ENCODE measurements at regions of chr18 and their contacts with region 1.

Region 1: GRCh38 chr18:48951448-48952286 is 902 bp upstream of the SMAD7 start:
- DNase-seq: peak; percentile 91 to 95 (median 91)
- ATAC-seq: peak; percentile 74 to 85 (median 77)
- H3K4me3 ChIP-seq: peak overlapping the region; percentile 72 to 98 (median 90)
- H3K27ac ChIP-seq: peak overlapping the region; percentile 95 to 100 (median 98)
- H3K4me1 ChIP-seq: peaks cover under 1 to 57% (median 39%) of the 10 kb centered on the region in 12 donors
- H3K27me3 ChIP-seq: peaks cover 0 to 6% (median 0%) of the 10 kb centered on the region in 9 donors
- CTCF ChIP-seq: peak in 6 of 12 donors; percentile 14 to 54 (median 32)
- POLR2A ChIP-seq: peak in 1 of 2 donors; percentile 87

Region 2: DNA sequence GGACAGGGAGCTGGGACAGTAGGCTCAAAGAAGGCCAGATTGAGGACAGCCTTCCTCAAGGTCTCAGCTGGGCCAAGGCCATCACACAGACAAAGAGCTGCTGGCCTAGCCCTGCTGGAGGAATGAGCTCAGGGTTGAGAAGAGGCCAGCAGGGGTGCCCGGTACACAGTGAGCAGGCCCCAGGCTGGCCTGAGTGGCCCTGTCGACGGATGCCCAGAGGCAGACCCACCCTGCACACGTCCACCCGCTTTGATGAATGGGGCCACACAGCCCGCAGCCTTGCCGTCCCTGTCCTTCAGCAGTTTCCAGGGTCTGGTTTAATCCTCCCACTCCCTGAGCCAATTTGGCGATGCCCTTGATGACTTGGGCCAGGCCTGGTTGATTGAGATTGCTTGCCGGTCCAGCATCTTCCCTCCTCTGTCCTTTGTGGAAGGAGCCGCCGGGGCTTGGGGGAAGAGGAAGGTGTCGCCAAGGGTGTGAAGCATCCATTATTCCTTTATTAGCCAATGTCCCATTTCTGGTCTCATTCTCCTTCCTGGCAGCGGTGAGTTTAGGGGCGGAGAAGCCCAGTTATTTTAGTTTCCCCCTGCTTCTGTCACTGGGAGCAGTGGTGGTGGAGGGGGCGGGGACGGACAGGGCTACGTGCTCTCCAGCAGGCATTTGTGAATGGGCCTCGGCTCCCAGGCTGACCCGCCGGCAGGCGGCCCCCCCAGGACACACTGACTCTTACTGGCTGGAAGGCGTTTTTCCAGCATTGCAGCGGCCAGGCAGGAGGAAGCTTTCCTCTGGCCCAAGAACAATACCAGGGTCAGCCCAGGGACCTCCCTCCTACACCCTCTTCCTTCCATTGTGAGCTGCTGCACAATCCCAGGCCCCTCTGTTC is 271.1 kb before region 1 on chr18:
- intact Hi-C with region 1: loop called in 6 of 10 experiments (anchors 2 to 10 kb)
- DNase-seq: peak; percentile 88 to 92 (median 91)
- ATAC-seq: peak; percentile 89 to 95 (median 90)
- H3K4me3 ChIP-seq: no peak overlapping the region
- H3K27ac ChIP-seq: peak overlapping the region; percentile 56 to 94 (median 86)
- H3K4me1 ChIP-seq: peaks cover 8 to 75% (median 58%) of the 10 kb centered on the region in 12 donors
- H3K27me3 ChIP-seq: no peaks in the 10 kb centered on the region
- CTCF ChIP-seq: peak in 8 of 12 donors; percentile 17 to 56 (median 34)
- POLR2A ChIP-seq: no peak

Region 3: DNA sequence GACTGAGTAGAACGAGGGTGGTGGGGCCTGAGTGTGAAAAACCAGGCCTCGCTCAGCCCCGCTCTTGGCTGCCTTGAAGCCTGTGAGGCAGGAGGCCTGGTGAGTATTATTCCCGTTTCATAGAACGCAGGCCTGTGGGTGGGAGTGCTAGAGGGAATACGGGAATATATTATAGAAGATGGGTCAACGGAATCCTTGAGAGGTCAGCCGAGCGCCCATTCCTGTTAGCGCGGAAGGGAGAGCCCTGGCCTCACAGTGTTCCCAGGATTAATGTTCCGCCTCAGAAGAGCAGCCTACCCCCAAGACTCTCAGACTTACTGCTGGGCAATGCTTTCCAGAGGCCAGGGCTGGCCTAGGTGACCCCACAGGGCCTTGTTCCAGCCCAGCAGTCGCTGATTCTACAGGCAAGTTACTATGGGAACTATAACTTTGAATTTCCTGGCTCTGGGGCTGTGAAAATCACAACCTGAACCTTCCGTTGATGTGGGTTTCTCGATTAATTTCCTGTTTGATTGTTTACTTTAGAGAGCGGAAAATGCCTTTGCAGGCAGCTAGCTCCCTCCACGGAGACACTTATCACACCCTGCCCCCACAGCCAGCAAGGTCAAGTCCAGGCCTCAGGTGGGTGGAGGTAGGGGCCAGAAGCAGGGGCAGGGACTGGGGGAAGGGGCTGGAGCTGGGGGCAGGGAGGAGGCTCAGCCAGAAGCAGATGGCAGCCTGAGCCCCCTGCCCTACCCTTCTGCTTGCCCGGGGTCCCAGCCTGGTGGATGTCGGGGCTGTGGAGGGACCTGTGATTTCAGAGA is 109.2 kb before region 1 on chr18:
- intact Hi-C with region 1: loop called in 2 of 10 experiments (anchors 5 kb)
- DNase-seq: peak in 4 of 5 donors; percentile 50 to 66 (median 59)
- ATAC-seq: peak; percentile 43 to 80 (median 62)
- H3K4me3 ChIP-seq: no peak overlapping the region
- H3K27ac ChIP-seq: peak overlapping the region; percentile 49 to 98 (median 84)
- H3K4me1 ChIP-seq: peaks cover 6 to 73% (median 53%) of the 10 kb centered on the region in 12 donors
- H3K27me3 ChIP-seq: no peaks in the 10 kb centered on the region
- CTCF ChIP-seq: no peak
- POLR2A ChIP-seq: no peak

Region 4: DNA sequence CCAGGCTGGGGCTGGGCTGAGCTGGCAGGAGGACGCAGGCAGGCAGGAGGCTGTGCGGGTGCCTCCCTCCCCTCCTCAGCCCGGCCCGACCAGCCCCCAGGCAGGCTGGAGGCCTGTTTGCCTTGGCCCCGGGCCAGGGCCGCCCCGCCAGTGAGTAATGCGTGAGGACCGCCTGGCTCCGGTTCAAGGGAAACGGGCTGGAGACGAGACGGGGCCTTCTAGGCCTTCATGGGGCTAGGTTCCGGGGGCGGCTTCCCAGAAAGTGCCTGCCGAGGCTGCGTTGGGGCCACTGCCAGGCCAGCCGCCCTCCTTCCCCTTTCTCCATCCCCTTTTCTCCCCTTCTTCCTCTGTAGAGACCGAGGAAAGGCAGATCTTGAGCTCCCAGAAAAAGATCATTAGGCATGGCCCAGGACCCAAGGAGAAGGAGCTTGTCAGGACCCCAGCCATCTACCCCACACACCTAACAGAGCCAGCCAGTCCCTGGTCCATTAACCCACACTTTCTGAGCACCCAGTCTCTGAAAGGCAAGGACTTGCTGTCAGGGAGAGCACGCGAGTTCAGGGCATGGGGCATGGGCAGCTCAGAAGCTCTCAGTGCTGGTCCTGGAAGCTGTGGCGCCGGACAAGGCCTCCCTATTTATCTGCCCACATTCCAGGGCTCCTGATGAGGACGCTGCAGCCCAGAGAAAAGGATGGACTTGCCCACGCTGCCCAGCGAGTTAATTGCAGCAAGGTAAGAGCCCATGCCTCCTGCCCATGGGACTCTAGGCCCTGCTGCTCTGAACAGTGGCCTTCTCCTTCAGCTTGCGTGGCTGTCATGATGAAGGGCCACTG is 49.4 kb before region 1 on chr18:
- intact Hi-C with region 1: loop called in 1 of 10 experiments (anchors 5 kb)
- DNase-seq: peak; percentile 90 to 95 (median 94)
- ATAC-seq: peak; percentile 48 to 93 (median 91)
- H3K4me3 ChIP-seq: no peak overlapping the region
- H3K27ac ChIP-seq: peak overlapping the region; percentile 19 to 91 (median 69)
- H3K4me1 ChIP-seq: peaks cover 3 to 43% (median 19%) of the 10 kb centered on the region in 12 donors
- H3K27me3 ChIP-seq: no peaks in the 10 kb centered on the region
- CTCF ChIP-seq: no peak
- POLR2A ChIP-seq: no peak

Region 5: GRCh38 chr18:48975649-48976204 is 24.1 kb after region 1 on chr18:
- intact Hi-C with region 1: loop called in 2 of 10 experiments (anchors 2 kb)
- DNase-seq: peak; percentile 60 to 75 (median 67)
- ATAC-seq: peak; percentile 46 to 83 (median 74)
- H3K4me3 ChIP-seq: peak overlapping the region; percentile 57 to 96 (median 78)
- H3K27ac ChIP-seq: peak overlapping the region; percentile 65 to 93 (median 88)
- H3K4me1 ChIP-seq: peaks cover 0 to 25% (median 6%) of the 10 kb centered on the region in 12 donors
- H3K27me3 ChIP-seq: peaks cover 0 to 8% (median 0%) of the 10 kb centered on the region in 9 donors
- CTCF ChIP-seq: peak in 1 of 12 donors; percentile 13
- POLR2A ChIP-seq: no peak

Region 6: DNA sequence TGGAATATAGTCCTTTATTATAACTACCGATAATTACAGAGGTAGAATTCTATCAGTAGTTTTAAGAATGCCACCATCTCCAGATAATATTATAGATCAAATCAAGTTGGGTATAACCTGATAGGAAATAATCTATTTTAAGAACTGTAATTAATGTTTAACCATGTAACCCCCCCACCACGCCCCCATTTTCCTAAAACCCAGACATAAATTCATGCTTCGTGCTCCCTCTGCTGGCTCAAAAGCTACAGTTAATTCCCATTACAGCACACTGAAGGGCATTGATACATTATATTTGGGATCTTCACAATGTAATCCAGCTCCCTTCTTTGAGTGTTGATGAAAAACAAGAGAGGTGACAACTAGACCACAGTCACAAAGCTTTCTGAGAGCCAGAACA is 227.1 kb after region 1 on chr18:
- intact Hi-C with region 1: loop called in 4 of 10 experiments (anchors 10 kb)
- DNase-seq: peak in 1 of 5 donors; percentile 27
- ATAC-seq: no peak
- H3K4me3 ChIP-seq: no peak overlapping the region
- H3K27ac ChIP-seq: no peak overlapping the region
- H3K4me1 ChIP-seq: peaks cover 0 to 27% (median 0%) of the 10 kb centered on the region in 12 donors
- H3K27me3 ChIP-seq: no peaks in the 10 kb centered on the region
- CTCF ChIP-seq: peak; percentile 18 to 65 (median 54)
- POLR2A ChIP-seq: no peak